AG04450 (cell line): ENCODE measurements at regions of chr20 and their contacts with region 1.

Region 1: GRCh38 chr20:32484958-32485769 is 100.0 kb downstream of the NOL4L start:
- DNase-seq: no peak
- H3K4me3 ChIP-seq: peak overlapping the region; percentile 69
- H3K27ac ChIP-seq: peak overlapping the region; percentile 61
- H3K27me3 ChIP-seq: peaks cover 2% of the 10 kb centered on the region
- CTCF ChIP-seq: peak; percentile 89

Region 2: DNA sequence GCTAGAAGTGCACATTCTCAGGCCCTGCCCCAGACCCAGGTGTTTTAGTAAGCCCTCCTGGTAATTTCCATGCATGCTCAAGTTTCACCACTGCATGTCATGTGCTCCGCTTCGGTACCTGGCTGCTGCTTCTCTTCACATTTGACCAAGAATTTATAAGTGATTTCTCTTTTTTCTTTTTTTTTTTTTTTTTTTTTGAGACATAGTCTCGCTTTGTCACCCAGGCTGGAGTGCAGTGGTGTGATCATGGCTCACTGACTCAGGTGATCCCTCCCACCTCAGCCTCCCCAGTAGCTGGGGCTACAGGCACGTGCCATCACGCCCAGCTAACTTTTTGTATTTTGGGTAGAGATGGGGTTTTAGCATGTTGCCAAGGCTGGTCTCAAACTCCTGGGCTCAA is 359.7 kb before region 1 on chr20:
- CTCF ChIA-PET with region 1: no interaction called
- POLR2A ChIA-PET with region 1: interaction called, 10 read pairs
- DNase-seq: no peak
- H3K4me3 ChIP-seq: no peak overlapping the region
- H3K27ac ChIP-seq: no peak overlapping the region
- H3K27me3 ChIP-seq: no peaks in the 10 kb centered on the region
- CTCF ChIP-seq: no peak

Region 3: DNA sequence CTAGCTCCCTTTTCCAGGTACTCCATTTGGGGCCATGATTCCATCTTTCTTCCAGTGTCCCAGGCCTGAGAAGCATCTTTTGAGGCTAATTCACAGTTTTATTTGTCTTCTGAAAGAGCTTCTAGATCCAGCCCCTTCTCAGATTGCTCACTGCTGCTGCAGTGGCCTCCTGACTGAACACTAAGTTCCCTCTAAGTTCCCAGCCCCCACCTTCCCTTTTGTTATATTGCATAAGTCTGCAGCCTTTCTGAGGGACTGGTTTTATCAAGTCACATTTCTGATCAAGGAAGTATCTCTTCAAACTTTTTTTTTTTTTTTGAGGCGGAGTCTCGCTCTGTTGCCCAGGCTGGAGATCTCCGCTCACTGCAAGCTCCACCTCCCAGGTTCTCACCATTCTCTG is 345.3 kb after region 1 on chr20:
- CTCF ChIA-PET with region 1: interaction called, 15 read pairs
- POLR2A ChIA-PET with region 1: no interaction called
- DNase-seq: no peak
- H3K4me3 ChIP-seq: no peak overlapping the region
- H3K27ac ChIP-seq: no peak overlapping the region
- H3K27me3 ChIP-seq: no peaks in the 10 kb centered on the region
- CTCF ChIP-seq: no peak

Region 4: GRCh38 chr20:33169176-33169794 is 684.1 kb after region 1 on chr20:
- CTCF ChIA-PET with region 1: no interaction called
- POLR2A ChIA-PET with region 1: no interaction called
- DNase-seq: no peak
- H3K4me3 ChIP-seq: no peak overlapping the region
- H3K27ac ChIP-seq: no peak overlapping the region
- H3K27me3 ChIP-seq: no peaks in the 10 kb centered on the region
- CTCF ChIP-seq: peak; percentile 45